HEK293 (cell line): ENCODE measurements at regions of chr5 and their contacts with region 1.

Region 1: GRCh38 chr5:133309166-133309795 is 257.5 kb downstream of the HSPA4 start:
- H3K4me3 ChIP-seq: no peak overlapping the region
- H3K27ac ChIP-seq: no peak overlapping the region
- H3K4me1 ChIP-seq: no peaks in the 10 kb centered on the region
- CTCF ChIP-seq: no peak

Region 2: DNA sequence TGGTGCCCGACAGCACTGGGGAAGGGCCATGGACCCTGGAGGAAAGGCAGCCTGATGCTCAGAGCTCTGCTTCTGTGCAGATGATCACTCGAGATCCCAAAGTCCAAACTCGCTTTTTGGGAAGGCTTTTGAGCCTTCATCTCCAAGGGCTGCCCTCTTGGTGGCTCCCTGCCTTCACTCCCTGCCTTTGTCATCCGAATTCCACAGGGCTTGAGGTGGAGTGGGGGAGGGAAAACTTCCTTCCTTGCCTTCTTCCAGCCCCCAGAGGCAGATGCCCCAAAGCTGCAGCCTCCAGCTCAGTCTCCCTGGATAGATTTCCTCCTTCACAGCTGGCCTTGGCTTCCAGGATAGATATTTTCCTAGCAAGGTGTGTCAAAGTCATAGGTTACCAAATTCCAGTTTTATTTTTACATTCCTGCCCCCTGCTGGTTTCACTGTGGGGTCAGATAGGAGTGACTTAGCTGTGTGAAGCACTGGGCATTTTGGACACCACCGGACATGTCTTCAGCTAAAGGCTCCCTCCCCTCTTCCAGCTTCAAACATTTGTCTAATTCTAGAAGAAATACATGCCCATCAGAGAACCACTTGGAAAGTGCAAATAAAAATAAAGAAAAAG is 10.7 kb after region 1 on chr5:
- CTCF ChIA-PET with region 1: interaction called, 11 read pairs
- POLR2A ChIA-PET with region 1: no interaction called
- H3K4me3 ChIP-seq: no peak overlapping the region
- H3K27ac ChIP-seq: no peak overlapping the region
- H3K4me1 ChIP-seq: no peaks in the 10 kb centered on the region
- CTCF ChIP-seq: no peak